ENCODE measurements at regions of chr17 and their contacts with region 1.

Region 1: GRCh38 chr17:57009737-57010445 is 32.0 kb downstream of the SCPEP1 start:
- DNase-seq: peak; percentile 28 to 61 (median 40)
- H3K4me3 ChIP-seq: no peak overlapping the region
- H3K4me3 Mint-ChIP-seq: peak overlapping the region; percentile 3 to 68 (median 43)
- H3K27ac ChIP-seq: no peak overlapping the region
- H3K27ac Mint-ChIP-seq: peak overlapping the region in 2 of 7 donors; percentile 1 to 3
- H3K4me1 ChIP-seq: peaks cover 6% of the 10 kb centered on the region
- H3K4me1 Mint-ChIP-seq: peaks cover 5 to 7% (median 6%) of the 10 kb centered on the region in 4 donors
- H3K27me3 ChIP-seq: no peaks in the 10 kb centered on the region
- H3K27me3 Mint-ChIP-seq: peaks cover 0 to 3% of the 10 kb centered on the region in 2 donors

Region 2: DNA sequence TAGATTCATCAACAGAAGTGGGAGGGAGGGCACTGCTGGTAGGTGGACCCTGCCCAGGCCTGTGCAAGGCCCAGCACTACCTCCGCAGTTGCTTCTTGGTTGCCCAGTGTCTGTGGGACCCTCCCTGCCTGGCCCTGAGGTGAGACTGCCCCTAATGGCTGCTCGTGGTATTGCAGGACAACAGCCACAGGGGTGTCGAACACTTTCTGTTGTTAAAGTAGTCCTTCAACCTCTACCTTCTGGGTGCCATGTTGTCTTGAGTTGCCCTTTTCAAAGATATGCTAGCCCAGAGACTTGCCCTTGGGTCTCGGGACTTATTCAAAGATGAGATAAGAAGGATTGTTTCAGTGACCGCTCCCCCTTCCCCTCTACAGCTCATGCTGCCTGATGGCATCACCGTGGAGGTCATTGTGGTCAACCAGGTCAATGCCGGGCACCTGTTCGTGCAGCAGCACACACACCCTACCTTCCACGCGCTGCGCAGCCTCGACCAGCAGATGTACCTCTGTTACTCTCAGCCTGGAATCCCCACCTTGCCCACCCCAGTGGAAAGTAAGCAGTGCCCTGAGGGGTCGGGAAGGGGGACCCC is 104.3 kb after region 1 on chr17:
- CTCF ChIA-PET with region 1: interaction called, 4 read pairs
- POLR2A ChIA-PET with region 1: no interaction called
- intact Hi-C with region 1: loop called (anchors 1 kb)
- DNase-seq: peak; percentile 31 to 50 (median 43)
- H3K4me3 ChIP-seq: no peak overlapping the region
- H3K4me3 Mint-ChIP-seq: no peak overlapping the region
- H3K27ac ChIP-seq: no peak overlapping the region
- H3K27ac Mint-ChIP-seq: peak overlapping the region in 2 of 7 donors; percentile 29 to 37
- H3K4me1 ChIP-seq: peaks cover 3% of the 10 kb centered on the region
- H3K4me1 Mint-ChIP-seq: peaks cover 0 to 1% (median 0%) of the 10 kb centered on the region in 4 donors
- H3K27me3 ChIP-seq: no peaks in the 10 kb centered on the region
- H3K27me3 Mint-ChIP-seq: no peaks in the 10 kb centered on the region